ENCODE measurements at regions of chr12 and their contacts with region 1.

Region 1: GRCh38 chr12:93766796-93767523 is 89.8 kb downstream of the CRADD start:
- DNase-seq: peak in 2 of 3 donors; percentile 43 to 47
- H3K4me3 ChIP-seq: peak overlapping the region in 3 of 7 experiments; percentile 3 to 38 (median 29)
- H3K27ac ChIP-seq: peak overlapping the region in 1 of 2 experiments; percentile 10
- H3K4me1 ChIP-seq: peaks cover 17 to 65% (median 39%) of the 10 kb centered on the region in 4 experiments
- H3K27me3 ChIP-seq: no peaks in the 10 kb centered on the region

Region 2: DNA sequence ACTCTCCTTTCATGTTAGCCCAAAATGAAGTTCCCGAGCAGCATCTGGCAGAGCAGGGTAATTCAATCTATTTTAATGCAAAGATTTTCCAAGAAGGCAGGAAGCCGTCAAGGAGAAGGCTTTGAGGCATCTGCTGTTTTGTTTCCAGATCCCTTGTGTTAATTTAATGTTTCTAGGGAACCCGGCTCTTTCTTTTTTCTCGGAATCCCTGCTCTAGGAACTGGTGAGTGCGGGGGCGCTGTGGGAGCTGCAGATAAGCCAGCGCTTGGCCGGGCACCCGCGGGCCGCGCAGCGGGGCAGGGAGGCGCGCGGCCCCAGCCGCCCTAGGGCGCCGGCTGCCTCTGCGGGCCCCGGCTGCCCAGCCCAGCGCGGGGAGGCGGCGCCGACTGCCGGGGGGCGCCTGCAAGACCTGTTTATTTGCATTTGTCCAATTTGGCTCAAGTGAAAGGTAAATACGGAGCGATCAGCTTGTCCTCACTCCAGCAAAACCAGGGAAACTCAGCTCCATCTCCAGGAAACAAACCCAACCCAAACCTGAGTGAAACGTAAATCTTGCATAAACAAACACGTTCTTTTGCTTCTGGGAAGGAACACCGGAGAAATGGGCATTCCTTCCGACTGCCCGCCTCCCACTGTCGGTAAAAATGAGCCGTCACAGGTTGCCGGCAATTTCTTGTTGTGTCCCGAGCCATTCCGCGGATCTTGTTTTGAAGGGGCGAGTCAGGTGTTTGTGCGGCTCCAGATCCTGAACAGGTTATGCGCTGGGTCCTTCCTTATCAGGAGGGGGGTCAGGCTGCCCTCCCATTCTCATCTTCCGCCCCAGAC is 24.6 kb before region 1 on chr12:
- CTCF ChIA-PET with region 1: interaction called, 12 read pairs
- POLR2A ChIA-PET with region 1: no interaction called
- DNase-seq: peak; percentile 81 to 86 (median 83)
- H3K4me3 ChIP-seq: peak overlapping the region; percentile 44 to 98 (median 83)
- H3K27ac ChIP-seq: peak overlapping the region; percentile 87 to 92
- H3K4me1 ChIP-seq: peaks cover 16 to 68% (median 45%) of the 10 kb centered on the region in 4 experiments
- H3K27me3 ChIP-seq: no peaks in the 10 kb centered on the region

Region 3: GRCh38 chr12:93790472-93791152 is 23.7 kb after region 1 on chr12:
- CTCF ChIA-PET with region 1: interaction called, 14 read pairs
- POLR2A ChIA-PET with region 1: no interaction called
- DNase-seq: peak; percentile 42 to 77 (median 73)
- H3K4me3 ChIP-seq: no peak overlapping the region
- H3K27ac ChIP-seq: no peak overlapping the region
- H3K4me1 ChIP-seq: peaks cover 3 to 22% (median 13%) of the 10 kb centered on the region in 4 experiments
- H3K27me3 ChIP-seq: no peaks in the 10 kb centered on the region

Region 4: DNA sequence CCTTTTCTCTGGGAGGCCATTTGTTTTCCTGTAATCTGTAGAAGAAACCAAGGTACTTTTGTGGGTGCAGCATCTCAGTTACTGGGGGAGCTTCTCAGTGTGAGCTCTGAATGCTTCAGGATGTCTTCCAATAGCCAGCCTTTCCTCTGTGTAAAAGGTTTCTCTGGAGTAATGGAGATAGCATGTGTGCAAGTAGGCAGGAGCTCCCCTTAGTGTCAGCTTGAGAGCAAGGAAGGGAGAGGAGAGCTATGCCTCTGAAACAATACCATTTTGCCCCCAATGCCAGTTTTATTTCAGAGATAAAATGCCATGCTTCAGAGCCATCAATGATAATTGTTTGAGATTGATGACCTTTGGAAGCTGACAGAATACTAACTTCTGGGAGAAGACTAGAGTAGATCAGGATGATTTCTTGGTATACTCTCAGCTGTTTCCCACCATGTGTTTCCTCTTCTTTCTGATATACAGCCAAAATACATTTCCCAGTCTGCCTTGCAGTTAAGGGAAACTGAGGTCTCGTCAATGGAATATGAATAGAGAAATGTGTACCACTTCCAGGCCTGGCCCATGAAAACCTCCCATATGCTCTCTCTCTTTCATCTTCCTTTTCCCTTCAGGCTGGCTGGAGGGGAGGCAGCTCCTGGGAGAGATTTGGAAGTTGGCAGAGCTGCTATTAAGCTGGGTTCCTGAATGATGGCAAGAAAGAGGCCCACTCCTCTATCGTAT is 35.9 kb after region 1 on chr12:
- CTCF ChIA-PET with region 1: interaction called, 13 read pairs
- POLR2A ChIA-PET with region 1: no interaction called
- DNase-seq: peak; percentile 18 to 47 (median 43)
- H3K4me3 ChIP-seq: peak overlapping the region in 5 of 7 experiments; percentile 19 to 73 (median 52)
- H3K27ac ChIP-seq: peak overlapping the region; percentile 48 to 81
- H3K4me1 ChIP-seq: peaks cover 7 to 34% (median 12%) of the 10 kb centered on the region in 4 experiments
- H3K27me3 ChIP-seq: no peaks in the 10 kb centered on the region

Region 5: GRCh38 chr12:94074980-94075928 is 308.3 kb after region 1 on chr12:
- CTCF ChIA-PET with region 1: interaction called, 16 read pairs
- POLR2A ChIA-PET with region 1: no interaction called
- DNase-seq: peak; percentile 47 to 56 (median 54)
- H3K4me3 ChIP-seq: no peak overlapping the region
- H3K27ac ChIP-seq: no peak overlapping the region
- H3K4me1 ChIP-seq: peaks cover 2 to 45% (median 22%) of the 10 kb centered on the region in 4 experiments
- H3K27me3 ChIP-seq: no peaks in the 10 kb centered on the region